ENCODE measurements at regions of chr4 and their contacts with region 1.

Region 1: GRCh38 chr4:113952452-113953029 is 26.9 kb downstream of the ARSJ start:
- DNase-seq: peak in 7 of 35 experiments; percentile 0 to 48 (median 3)
- ATAC-seq: peak; percentile 45 to 71 (median 64)
- H3K4me3 ChIP-seq: no peak overlapping the region
- H3K4me3 Mint-ChIP-seq: no peak overlapping the region
- H3K27ac ChIP-seq: no peak overlapping the region
- H3K27ac Mint-ChIP-seq: no peak overlapping the region
- H3K4me1 ChIP-seq: peaks cover 0 to 3% of the 10 kb centered on the region in 2 experiments
- H3K4me1 Mint-ChIP-seq: peaks cover 7 to 13% (median 10%) of the 10 kb centered on the region in 3 donors
- H3K27me3 ChIP-seq: no peaks in the 10 kb centered on the region
- H3K27me3 Mint-ChIP-seq: peaks cover 0 to 4% of the 10 kb centered on the region in 2 donors

Region 2: DNA sequence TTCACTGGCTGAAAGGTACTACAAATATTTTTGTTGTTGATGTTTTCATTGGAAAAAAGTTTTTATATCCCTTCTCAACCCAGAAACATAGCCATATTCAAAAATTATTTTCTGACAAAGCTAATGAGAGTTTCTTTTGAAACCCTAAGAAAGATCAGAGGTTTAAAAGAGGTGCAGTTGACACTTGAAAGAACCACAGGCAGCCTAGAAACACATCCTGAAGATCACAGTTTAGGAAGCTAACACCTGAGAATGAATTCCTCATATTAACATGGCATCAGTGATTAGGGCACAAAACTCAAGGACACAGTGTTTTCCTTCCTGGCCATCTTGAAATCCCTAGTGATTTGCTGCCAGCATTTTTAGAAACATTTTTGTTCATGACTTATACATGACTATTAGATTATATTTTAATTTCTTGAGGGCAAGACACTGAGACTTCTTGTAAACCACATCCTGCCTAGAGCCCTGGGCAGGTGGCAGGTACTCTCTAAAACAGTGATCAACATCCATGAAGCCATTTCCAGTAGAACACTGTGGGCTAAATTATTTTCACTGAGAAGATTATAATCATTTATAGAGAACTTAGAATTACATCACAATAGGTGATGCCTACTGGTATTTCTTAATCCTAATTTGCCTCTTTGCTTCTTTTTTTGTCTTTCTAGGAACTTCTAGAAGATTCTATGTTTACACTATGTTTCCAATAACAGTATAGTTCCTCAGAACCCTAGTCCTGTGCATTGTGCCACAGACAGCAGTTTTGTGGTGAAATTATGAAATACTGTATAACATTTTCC is 53.1 kb before region 1 on chr4:
- CTCF ChIA-PET with region 1: no interaction called
- POLR2A ChIA-PET with region 1: no interaction called
- DNase-seq: peak in 32 of 35 experiments; percentile 14 to 71 (median 41)
- ATAC-seq: peak; percentile 77 to 80 (median 80)
- H3K4me3 ChIP-seq: peak overlapping the region in 1 of 2 donors; percentile 14
- H3K4me3 Mint-ChIP-seq: peak overlapping the region in 2 of 3 donors; percentile 50 to 52
- H3K27ac ChIP-seq: peak overlapping the region; percentile 63
- H3K27ac Mint-ChIP-seq: peak overlapping the region; percentile 92 to 97
- H3K4me1 ChIP-seq: peaks cover 30 to 57% of the 10 kb centered on the region in 2 experiments
- H3K4me1 Mint-ChIP-seq: peaks cover 62 to 68% (median 62%) of the 10 kb centered on the region in 3 donors
- H3K27me3 ChIP-seq: no peaks in the 10 kb centered on the region
- H3K27me3 Mint-ChIP-seq: no peaks in the 10 kb centered on the region

Region 3: GRCh38 chr4:114076899-114077570 is 124.5 kb after region 1 on chr4:
- CTCF ChIA-PET with region 1: interaction called in 1 of 2 experiments, 25 read pairs
- POLR2A ChIA-PET with region 1: no interaction called
- DNase-seq: no peak
- ATAC-seq: no peak
- H3K4me3 ChIP-seq: no peak overlapping the region
- H3K4me3 Mint-ChIP-seq: no peak overlapping the region
- H3K27ac ChIP-seq: no peak overlapping the region
- H3K27ac Mint-ChIP-seq: no peak overlapping the region
- H3K4me1 ChIP-seq: no peaks in the 10 kb centered on the region
- H3K4me1 Mint-ChIP-seq: peaks cover 0 to 1% (median 0%) of the 10 kb centered on the region in 3 donors
- H3K27me3 ChIP-seq: no peaks in the 10 kb centered on the region
- H3K27me3 Mint-ChIP-seq: no peaks in the 10 kb centered on the region